Panc1 (cell line): ENCODE measurements at regions of chr17 and their contacts with region 1.

Region 1: DNA sequence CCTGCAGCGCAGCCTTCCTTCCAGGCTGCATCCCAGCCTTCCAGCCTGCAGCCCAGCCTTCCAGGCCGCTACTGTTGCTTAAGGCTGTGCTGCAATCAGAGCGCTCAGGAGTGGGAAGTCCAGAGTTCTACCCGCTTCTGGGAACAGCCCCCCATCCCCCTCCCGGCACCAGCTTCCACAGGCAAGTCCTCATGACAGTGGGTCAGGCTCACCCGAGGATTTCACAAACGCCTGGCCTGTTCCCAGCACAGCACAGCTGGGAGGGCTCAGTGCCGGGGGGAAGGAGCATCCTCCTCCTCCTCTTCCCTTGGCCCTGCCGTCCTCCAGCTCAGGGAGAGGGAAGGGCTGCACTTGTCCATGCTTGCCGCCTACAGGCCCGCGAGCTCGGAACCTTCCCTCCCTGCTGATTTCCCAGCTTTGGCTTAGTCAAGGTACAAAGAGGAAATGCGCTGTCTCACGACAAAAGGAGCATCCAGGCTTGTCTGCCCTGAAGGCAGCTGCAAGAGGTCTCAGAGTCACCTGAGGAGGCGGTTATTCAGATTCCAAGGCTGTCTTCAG is 8.3 kb downstream of the SOCS3 start:
- DNase-seq: no peak
- ATAC-seq: peak; percentile 19
- H3K4me3 ChIP-seq: peak overlapping the region in 1 of 2 experiments; percentile 40; a peak in 1 of 4 replicates
- H3K27ac ChIP-seq: peak overlapping the region; percentile 98
- H3K4me1 ChIP-seq: peaks cover 73% of the 10 kb centered on the region
- H3K27me3 ChIP-seq: no peaks in the 10 kb centered on the region
- CTCF ChIP-seq: no peak

Region 2: GRCh38 chr17:78329263-78330059 is 22.1 kb before region 1 on chr17:
- CTCF ChIA-PET with region 1: interaction called, 6 read pairs
- POLR2A ChIA-PET with region 1: no interaction called
- in situ Hi-C with region 1: no loop called
- intact Hi-C with region 1: loop called (anchors 1 kb)
- DNase-seq: no peak
- ATAC-seq: peak; percentile 69
- H3K4me3 ChIP-seq: peak overlapping the region in 1 of 2 experiments; percentile 6; a peak in 1 of 4 replicates
- H3K27ac ChIP-seq: peak overlapping the region; percentile 87
- H3K4me1 ChIP-seq: peaks cover 58% of the 10 kb centered on the region
- H3K27me3 ChIP-seq: no peaks in the 10 kb centered on the region
- CTCF ChIP-seq: no peak